ENCODE measurements at regions of chr2 and their contacts with region 1.

Region 1: DNA sequence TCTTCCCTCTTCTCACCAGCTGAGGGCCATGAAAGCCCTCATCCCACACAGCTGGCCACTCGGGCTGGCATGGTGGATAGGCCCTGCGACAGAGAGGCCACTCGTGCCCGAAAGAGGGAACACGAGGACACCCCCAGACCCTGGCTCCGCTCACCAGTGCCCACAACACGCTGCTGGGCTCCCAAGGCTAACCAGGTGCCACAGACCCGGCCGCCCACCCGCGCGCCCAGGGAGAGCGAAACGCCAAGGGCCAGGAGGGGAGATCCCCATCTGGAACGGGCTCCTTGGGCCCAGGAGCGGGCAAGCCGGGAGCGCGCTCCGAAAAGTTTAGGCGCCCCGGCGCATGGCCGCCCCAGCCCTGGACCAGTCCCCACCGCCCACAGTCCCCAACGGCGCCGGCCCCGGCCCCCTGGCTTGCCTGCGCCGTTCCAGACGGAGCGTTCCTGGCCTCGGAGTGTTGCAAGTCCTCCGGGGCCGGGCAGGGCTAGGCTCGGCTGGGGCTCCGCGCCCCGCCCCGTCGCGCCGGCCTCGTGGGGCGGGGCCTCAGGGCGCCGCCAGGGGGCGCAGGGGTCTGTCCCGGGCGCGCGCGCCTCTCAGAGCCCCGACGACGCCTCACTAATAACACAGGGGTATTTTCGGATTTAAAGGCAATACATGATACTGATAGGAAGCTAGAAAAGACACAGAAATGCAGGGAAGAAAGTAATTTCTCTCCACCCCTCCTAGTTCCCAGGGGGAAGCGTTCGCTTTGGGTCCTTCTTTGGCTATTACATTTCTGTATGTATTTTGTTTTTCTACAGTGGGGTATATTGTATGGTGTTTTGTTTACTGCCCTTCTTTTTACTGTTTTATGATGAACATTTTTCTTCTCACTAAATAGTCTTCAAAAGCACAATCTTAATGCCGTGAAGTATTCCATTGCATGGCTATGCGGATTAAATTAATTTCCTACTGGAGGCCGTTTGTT is at the start of gene TMBIM1:
- DNase-seq: peak; percentile 89
- ATAC-seq: peak; percentile 80
- H3K4me3 Mint-ChIP-seq: peak within 1 kb of the TSS; percentile 83
- H3K27ac Mint-ChIP-seq: peak within 1 kb of the TSS; percentile 92
- H3K4me1 Mint-ChIP-seq: peaks cover 73% of the 10 kb centered on the region
- H3K27me3 Mint-ChIP-seq: no peaks in the 10 kb centered on the region
- CTCF ChIP-seq: peak; percentile 40
- total RNA-seq, gene TMBIM1: 40.7 and 45.0 TPM in 2 replicates

Region 2: GRCh38 chr2:218257390-218257981 is 34.8 kb before region 1 on chr2:
- CTCF ChIA-PET with region 1: no interaction called
- POLR2A ChIA-PET with region 1: interaction called, 9 read pairs
- intact Hi-C with region 1: loop called (anchors 1 kb)
- DNase-seq: peak; percentile 67
- ATAC-seq: peak; percentile 89
- H3K4me3 Mint-ChIP-seq: peak overlapping the region; percentile 73
- H3K27ac Mint-ChIP-seq: peak overlapping the region; percentile 92
- H3K4me1 Mint-ChIP-seq: peaks cover 70% of the 10 kb centered on the region
- H3K27me3 Mint-ChIP-seq: no peaks in the 10 kb centered on the region
- CTCF ChIP-seq: no peak

Region 3: GRCh38 chr2:218360447-218360846 is 68.1 kb after region 1 on chr2:
- CTCF ChIA-PET with region 1: interaction called, 22 read pairs
- POLR2A ChIA-PET with region 1: interaction called, 3 read pairs
- intact Hi-C with region 1: loop called (anchors 2 kb)
- DNase-seq: no peak
- ATAC-seq: no peak
- H3K4me3 Mint-ChIP-seq: no peak overlapping the region
- H3K27ac Mint-ChIP-seq: peak overlapping the region; percentile 25
- H3K4me1 Mint-ChIP-seq: peaks cover 11% of the 10 kb centered on the region
- H3K27me3 Mint-ChIP-seq: no peaks in the 10 kb centered on the region
- CTCF ChIP-seq: no peak

Region 4: GRCh38 chr2:218648088-218648786 is 355.9 kb after region 1 on chr2:
- CTCF ChIA-PET with region 1: no interaction called
- POLR2A ChIA-PET with region 1: no interaction called
- intact Hi-C with region 1: loop called (anchors 5 kb)
- DNase-seq: peak; percentile 36
- ATAC-seq: peak; percentile 88
- H3K4me3 Mint-ChIP-seq: no peak overlapping the region
- H3K27ac Mint-ChIP-seq: no peak overlapping the region
- H3K4me1 Mint-ChIP-seq: no peaks in the 10 kb centered on the region
- H3K27me3 Mint-ChIP-seq: no peaks in the 10 kb centered on the region
- CTCF ChIP-seq: no peak

Region 5: GRCh38 chr2:218898109-218898878 is 606.0 kb after region 1 on chr2:
- CTCF ChIA-PET with region 1: no interaction called
- POLR2A ChIA-PET with region 1: no interaction called
- intact Hi-C with region 1: loop called (anchors 5 kb)
- DNase-seq: peak; percentile 88
- ATAC-seq: peak; percentile 22
- H3K4me3 Mint-ChIP-seq: peak overlapping the region; percentile 85
- H3K27ac Mint-ChIP-seq: peak overlapping the region; percentile 84
- H3K4me1 Mint-ChIP-seq: peaks cover 47% of the 10 kb centered on the region
- H3K27me3 Mint-ChIP-seq: peaks cover 22% of the 10 kb centered on the region
- CTCF ChIP-seq: peak; percentile 97

Measured in activated B cell treated with CpG ODN at 0.5 μM for 24 hours (primary cell).